Colonic mucosa (tissue), 4 donors: ENCODE measurements at regions of chr6 and their contacts with region 1.

Region 1: GRCh38 chr6:24069526-24069925 is 56.5 kb upstream of the NRSN1 start:
- DNase-seq: no peak
- H3K4me3 ChIP-seq: no peak overlapping the region
- H3K27ac ChIP-seq: no peak overlapping the region
- H3K4me1 ChIP-seq: no peaks in the 10 kb centered on the region
- H3K27me3 ChIP-seq: no peaks in the 10 kb centered on the region
- CTCF ChIP-seq: no peak

Region 2: GRCh38 chr6:24205020-24205492 is 135.5 kb after region 1 on chr6:
- intact Hi-C with region 1: loop called (anchors 5 kb)
- DNase-seq: peak; percentile 21
- H3K4me3 ChIP-seq: no peak overlapping the region
- H3K27ac ChIP-seq: no peak overlapping the region
- H3K4me1 ChIP-seq: no peaks in the 10 kb centered on the region
- H3K27me3 ChIP-seq: no peaks in the 10 kb centered on the region
- CTCF ChIP-seq: peak; percentile 49

Region 3: GRCh38 chr6:24274441-24275083 is 205.0 kb after region 1 on chr6:
- intact Hi-C with region 1: loop called (anchors 5 kb)
- DNase-seq: no peak
- H3K4me3 ChIP-seq: no peak overlapping the region
- H3K27ac ChIP-seq: no peak overlapping the region
- H3K4me1 ChIP-seq: no peaks in the 10 kb centered on the region
- H3K27me3 ChIP-seq: no peaks in the 10 kb centered on the region
- CTCF ChIP-seq: peak; percentile 41